A549 (cell line): ENCODE measurements at regions of chr17 and their contacts with region 1.

Region 1: GRCh38 chr17:51056813-51057510 is 63.7 kb downstream of the SPAG9 start:
- DNase-seq: peak; percentile 53 to 71
- ATAC-seq: peak; percentile 88 to 91
- H3K4me3 ChIP-seq: no peak overlapping the region
- H3K27ac ChIP-seq: peak overlapping the region in 1 of 2 experiments; percentile 36; a peak in 1 of 6 replicates
- H3K4me1 ChIP-seq: peaks cover 24% of the 10 kb centered on the region
- CTCF ChIP-seq: peak; percentile 85
- EP300 ChIP-seq: no peak
- POLR2A ChIP-seq: no peak
- RAD21 ChIP-seq: peak; percentile 69 to 70

Region 2: DNA sequence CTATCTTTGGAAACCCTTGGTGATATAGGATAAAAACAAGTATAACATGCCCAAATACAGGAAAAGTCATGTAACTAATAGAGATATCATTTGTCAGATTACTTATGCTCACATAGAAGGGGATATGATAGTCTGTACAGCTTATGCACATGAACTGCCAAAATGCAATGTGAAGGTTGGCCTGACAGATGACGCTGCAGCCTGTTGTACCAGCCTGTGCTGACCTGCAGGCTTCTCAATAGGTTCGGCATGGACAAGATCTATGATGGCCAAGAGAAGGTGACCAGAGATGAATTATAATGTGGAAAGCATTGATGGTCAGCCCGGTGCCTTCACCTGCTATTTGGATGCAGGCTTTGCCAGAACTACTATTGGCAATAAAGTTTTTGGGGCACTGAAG is 208.9 kb before region 1 on chr17:
- CTCF ChIA-PET with region 1: interaction called, 24 read pairs
- POLR2A ChIA-PET with region 1: no interaction called
- DNase-seq: no peak
- ATAC-seq: no peak
- H3K4me3 ChIP-seq: no peak overlapping the region
- H3K27ac ChIP-seq: no peak overlapping the region
- H3K4me1 ChIP-seq: peaks cover 20% of the 10 kb centered on the region
- CTCF ChIP-seq: no peak
- EP300 ChIP-seq: no peak
- POLR2A ChIP-seq: no peak
- RAD21 ChIP-seq: 0 out of 5 replicates have a peak, but pooled peaks of 1 of the 2 experiments have one; percentile 31

Region 3: DNA sequence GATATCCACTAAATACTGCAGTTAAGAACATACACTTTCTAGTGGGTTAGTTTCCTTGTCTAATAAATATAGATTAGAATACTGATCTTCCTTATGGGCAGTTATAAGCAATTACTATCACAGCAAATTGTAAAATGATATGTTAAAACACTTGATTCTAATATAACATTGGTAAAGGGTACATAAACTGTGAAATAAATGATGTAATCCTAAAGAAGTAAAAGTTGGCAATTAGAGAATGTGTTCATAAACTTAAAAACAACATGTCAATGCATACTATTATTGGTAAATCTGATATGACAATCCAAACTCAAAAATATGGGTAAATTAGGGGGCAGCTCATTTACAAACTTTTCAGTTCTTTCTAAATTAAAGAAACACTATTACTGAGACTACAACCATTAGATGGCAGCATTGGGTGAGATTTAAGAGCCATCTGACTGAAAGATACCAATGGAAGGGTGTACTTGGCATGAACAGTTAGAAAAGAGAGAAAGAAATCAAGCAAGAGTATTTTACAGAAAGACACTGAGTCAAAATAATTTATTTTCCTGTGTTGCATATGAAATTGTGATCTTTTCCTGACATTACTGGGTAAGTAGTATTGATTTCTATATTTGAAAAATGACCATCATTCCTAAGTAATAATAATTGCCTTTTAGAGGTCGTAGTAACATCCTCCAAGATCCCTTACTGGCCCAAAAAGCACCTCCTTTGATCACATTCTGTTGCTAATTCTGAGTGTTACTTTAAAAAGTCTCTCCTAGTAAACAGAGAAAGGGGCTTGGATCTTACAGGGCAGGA is 55.9 kb before region 1 on chr17:
- CTCF ChIA-PET with region 1: interaction called, 58 read pairs
- POLR2A ChIA-PET with region 1: no interaction called
- DNase-seq: peak; percentile 62 to 78
- ATAC-seq: peak; percentile 86 to 91; a peak in 5 of 6 replicates
- H3K4me3 ChIP-seq: no peak overlapping the region
- H3K27ac ChIP-seq: no peak overlapping the region
- H3K4me1 ChIP-seq: no peaks in the 10 kb centered on the region
- CTCF ChIP-seq: peak; percentile 84
- EP300 ChIP-seq: no peak
- POLR2A ChIP-seq: no peak
- RAD21 ChIP-seq: peak; percentile 86 to 89

Region 4: GRCh38 chr17:51046514-51047384 is 10.2 kb before region 1 on chr17:
- CTCF ChIA-PET with region 1: interaction called, 31 read pairs
- POLR2A ChIA-PET with region 1: no interaction called
- DNase-seq: peak in 1 of 2 experiments; percentile 26
- ATAC-seq: peak; percentile 43 to 75; a peak in 5 of 6 replicates
- H3K4me3 ChIP-seq: no peak overlapping the region
- H3K27ac ChIP-seq: no peak overlapping the region
- H3K4me1 ChIP-seq: peaks cover 9% of the 10 kb centered on the region; the same call in 2 of the 3 replicates
- CTCF ChIP-seq: no peak
- EP300 ChIP-seq: no peak
- POLR2A ChIP-seq: no peak
- RAD21 ChIP-seq: no peak

Region 5: DNA sequence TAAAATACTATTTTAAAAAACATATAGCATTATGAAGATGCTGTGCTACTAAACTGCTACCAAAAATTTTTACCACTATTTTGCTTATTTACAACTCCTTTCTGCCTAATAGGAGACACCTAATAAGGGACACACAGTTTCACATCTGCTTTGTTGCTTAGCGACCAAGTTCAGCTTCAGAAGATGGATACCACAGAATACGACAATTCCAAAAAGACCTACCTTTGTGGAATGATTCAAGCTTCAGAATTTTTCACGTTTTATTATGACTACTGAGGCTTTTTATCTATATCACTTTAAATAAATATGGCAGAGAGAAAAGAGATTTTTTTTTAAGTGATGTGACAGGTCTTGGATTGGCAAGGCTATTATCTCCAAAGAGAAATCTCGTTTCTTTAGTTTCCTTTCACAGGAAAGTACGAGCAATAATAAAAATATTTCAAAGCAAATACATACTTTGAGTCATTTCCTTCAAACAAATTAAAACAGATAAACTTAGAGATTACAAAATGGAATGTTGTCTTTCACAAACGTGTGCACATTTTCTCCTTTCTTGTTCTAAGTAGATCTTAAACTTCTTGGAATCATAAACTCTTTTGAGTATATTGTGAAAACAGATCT is 28.3 kb after region 1 on chr17:
- CTCF ChIA-PET with region 1: interaction called, 11 read pairs
- POLR2A ChIA-PET with region 1: no interaction called
- DNase-seq: peak in 1 of 2 experiments; percentile 21
- ATAC-seq: peak in 1 of 2 experiments; percentile 12; a peak in 1 of 6 replicates
- H3K4me3 ChIP-seq: no peak overlapping the region
- H3K27ac ChIP-seq: peak overlapping the region; percentile 2 to 57; a peak in 3 of 6 replicates
- H3K4me1 ChIP-seq: peaks cover 30% of the 10 kb centered on the region
- CTCF ChIP-seq: no peak
- EP300 ChIP-seq: no peak
- POLR2A ChIP-seq: no peak
- RAD21 ChIP-seq: no peak

Region 6: GRCh38 chr17:51135956-51136355 is 79.0 kb after region 1 on chr17:
- CTCF ChIA-PET with region 1: no interaction called
- POLR2A ChIA-PET with region 1: no interaction called
- DNase-seq: no peak
- ATAC-seq: no peak
- H3K4me3 ChIP-seq: no peak overlapping the region
- H3K27ac ChIP-seq: no peak overlapping the region
- H3K4me1 ChIP-seq: peaks cover 12% of the 10 kb centered on the region
- CTCF ChIP-seq: no peak
- EP300 ChIP-seq: no peak
- POLR2A ChIP-seq: no peak
- RAD21 ChIP-seq: no peak